T-cell (primary cell): ENCODE measurements at regions of chr11 and their contacts with region 1.

Region 1: DNA sequence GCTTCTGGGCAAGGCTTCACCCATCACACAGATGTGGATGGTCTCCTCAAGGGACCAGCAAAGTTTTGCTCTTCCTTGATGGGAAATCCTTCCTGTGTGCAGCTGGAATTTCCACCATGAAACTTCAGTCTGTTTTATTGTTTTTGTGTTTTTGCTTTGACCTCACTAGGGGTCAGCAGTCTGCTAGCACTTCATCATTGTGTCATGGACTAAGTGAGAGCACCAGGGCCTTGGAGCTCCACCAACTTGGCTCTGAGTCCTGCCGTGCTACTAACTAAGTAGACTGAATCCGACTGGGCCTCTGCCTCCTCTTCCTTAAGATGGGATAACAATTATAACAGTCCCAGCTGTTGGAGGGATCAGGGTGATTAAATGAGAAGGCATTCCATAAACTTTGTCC is 305.8 kb upstream of the NCAM1 start:
- DNase-seq: no peak
- ATAC-seq: no peak
- H3K4me3 ChIP-seq: no peak overlapping the region
- H3K4me3 Mint-ChIP-seq: no peak overlapping the region
- H3K27ac ChIP-seq: no peak overlapping the region
- H3K27ac Mint-ChIP-seq: no peak overlapping the region
- H3K4me1 ChIP-seq: no peaks in the 10 kb centered on the region
- H3K4me1 Mint-ChIP-seq: no peaks in the 10 kb centered on the region
- H3K27me3 ChIP-seq: peaks cover 0 to 12% of the 10 kb centered on the region in 2 experiments
- H3K27me3 Mint-ChIP-seq: peaks cover 4 to 17% of the 10 kb centered on the region in 2 donors

Region 2: GRCh38 chr11:112637076-112637475 is 18.3 kb before region 1 on chr11:
- CTCF ChIA-PET with region 1: no interaction called
- POLR2A ChIA-PET with region 1: no interaction called
- DNase-seq: no peak
- ATAC-seq: no peak
- H3K4me3 ChIP-seq: no peak overlapping the region
- H3K4me3 Mint-ChIP-seq: no peak overlapping the region
- H3K27ac ChIP-seq: no peak overlapping the region
- H3K27ac Mint-ChIP-seq: no peak overlapping the region
- H3K4me1 ChIP-seq: no peaks in the 10 kb centered on the region
- H3K4me1 Mint-ChIP-seq: no peaks in the 10 kb centered on the region
- H3K27me3 ChIP-seq: peaks cover 0 to 9% of the 10 kb centered on the region in 2 experiments
- H3K27me3 Mint-ChIP-seq: peaks cover 10 to 34% of the 10 kb centered on the region in 2 donors

Region 3: GRCh38 chr11:112922606-112923005 is 267.2 kb after region 1 on chr11:
- CTCF ChIA-PET with region 1: no interaction called
- POLR2A ChIA-PET with region 1: interaction called in 1 of 2 experiments, 13 read pairs
- DNase-seq: no peak
- ATAC-seq: no peak
- H3K4me3 ChIP-seq: no peak overlapping the region
- H3K4me3 Mint-ChIP-seq: no peak overlapping the region
- H3K27ac ChIP-seq: no peak overlapping the region
- H3K27ac Mint-ChIP-seq: no peak overlapping the region
- H3K4me1 ChIP-seq: no peaks in the 10 kb centered on the region
- H3K4me1 Mint-ChIP-seq: no peaks in the 10 kb centered on the region
- H3K27me3 ChIP-seq: no peaks in the 10 kb centered on the region
- H3K27me3 Mint-ChIP-seq: peaks cover 7% of the 10 kb centered on the region in 2 donors